A673 (cell line): ENCODE measurements at regions of chr20 and their contacts with region 1.

Region 1: GRCh38 chr20:57048027-57048869 is 218.2 kb downstream of the BMP7 start:
- DNase-seq: peak; percentile 60
- H3K4me3 ChIP-seq: no peak overlapping the region
- H3K27ac ChIP-seq: no peak overlapping the region
- H3K4me1 ChIP-seq: no peaks in the 10 kb centered on the region
- H3K27me3 ChIP-seq: peaks cover 10% of the 10 kb centered on the region
- CTCF ChIP-seq: peak; percentile 66

Region 2: DNA sequence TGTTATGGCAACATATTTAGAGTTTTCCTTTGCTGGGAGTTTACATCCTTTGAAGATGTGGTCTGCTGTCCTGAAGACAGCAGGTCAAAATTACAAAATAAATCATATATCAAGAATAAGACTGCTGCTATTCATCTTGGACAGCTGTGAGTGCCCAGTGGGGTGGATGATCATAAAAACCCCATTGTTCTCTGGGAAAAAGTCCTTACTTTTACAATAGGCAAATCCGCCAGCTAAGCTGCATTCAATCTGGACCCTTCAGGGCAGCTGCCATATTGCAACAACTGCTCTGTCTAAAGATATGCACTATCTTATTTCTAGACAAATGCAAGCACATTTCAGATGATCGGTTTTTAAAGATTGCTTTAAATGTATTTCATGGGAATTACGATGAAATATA is 616.8 kb before region 1 on chr20:
- CTCF ChIA-PET with region 1: no interaction called
- POLR2A ChIA-PET with region 1: interaction called, 11 read pairs
- intact Hi-C with region 1: no loop called
- DNase-seq: no peak
- H3K4me3 ChIP-seq: no peak overlapping the region
- H3K27ac ChIP-seq: no peak overlapping the region
- H3K4me1 ChIP-seq: no peaks in the 10 kb centered on the region
- H3K27me3 ChIP-seq: no peaks in the 10 kb centered on the region
- CTCF ChIP-seq: no peak

Region 3: GRCh38 chr20:57076098-57076651 is 27.9 kb after region 1 on chr20:
- CTCF ChIA-PET with region 1: no interaction called
- POLR2A ChIA-PET with region 1: no interaction called
- intact Hi-C with region 1: no loop called
- DNase-seq: no peak
- H3K4me3 ChIP-seq: no peak overlapping the region
- H3K27ac ChIP-seq: no peak overlapping the region
- H3K4me1 ChIP-seq: peaks cover 7% of the 10 kb centered on the region
- H3K27me3 ChIP-seq: peaks cover 27% of the 10 kb centered on the region
- CTCF ChIP-seq: no peak